SK-N-SH (cell line): ENCODE measurements at regions of chr13 and their contacts with region 1.

Region 1: DNA sequence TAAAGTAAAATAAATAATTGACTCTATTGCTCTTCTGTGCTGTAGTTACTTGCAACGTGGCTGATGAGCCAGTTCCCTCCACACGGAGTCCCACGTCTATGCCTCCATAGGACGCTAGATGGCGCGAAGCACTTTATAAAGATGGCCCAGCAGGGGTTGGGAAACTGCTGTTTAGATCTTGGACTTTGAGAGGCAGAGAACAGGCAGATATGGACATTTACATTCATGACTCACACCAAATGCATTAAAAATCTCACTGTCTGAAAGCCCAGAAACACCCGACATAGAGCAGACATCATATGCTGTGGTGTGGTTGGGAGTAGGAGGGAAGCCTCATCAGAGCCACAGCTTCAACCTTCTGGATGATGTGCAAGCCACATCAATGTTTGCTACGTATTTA is 643.1 kb upstream of the ARGLU1 start:
- DNase-seq: peak; percentile 70
- H3K4me3 ChIP-seq: peak overlapping the region in 1 of 2 experiments; percentile 11; a peak in 1 of 4 replicates
- H3K27ac ChIP-seq: no peak overlapping the region; a peak in 1 of 4 replicates
- H3K4me1 ChIP-seq: peaks cover 11 to 17% of the 10 kb centered on the region in 2 experiments; a peak in 3 of 4 replicates
- H3K27me3 ChIP-seq: no peaks in the 10 kb centered on the region
- CTCF ChIP-seq: peak; percentile 96
- EP300 ChIP-seq: 0 out of 4 replicates have a peak, but pooled peaks of 1 of the 2 experiments have one; percentile 21
- RAD21 ChIP-seq: peak; percentile 98

Region 2: DNA sequence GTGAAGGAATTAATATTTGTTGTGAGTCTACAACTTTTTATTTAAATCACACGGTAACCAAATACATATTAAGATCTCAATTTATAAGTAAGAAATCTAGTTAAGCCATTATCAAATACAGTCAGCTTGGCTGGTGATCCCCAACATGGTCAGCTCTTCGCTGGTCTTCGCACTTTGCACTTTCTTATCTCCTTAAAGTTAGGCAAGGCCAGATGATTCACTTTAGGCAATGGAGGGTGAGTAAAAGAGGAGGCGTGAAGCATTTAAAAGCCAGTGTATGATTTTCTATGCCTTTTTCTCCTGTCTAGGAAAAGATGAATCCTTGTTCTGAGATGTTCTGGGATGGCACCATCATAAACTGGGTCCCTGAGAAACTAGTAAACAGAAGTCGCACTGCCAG is 150.6 kb after region 1 on chr13:
- CTCF ChIA-PET with region 1: no interaction called
- POLR2A ChIA-PET with region 1: no interaction called
- DNase-seq: no peak
- H3K4me3 ChIP-seq: no peak overlapping the region
- H3K27ac ChIP-seq: no peak overlapping the region
- H3K4me1 ChIP-seq: peaks cover 3 to 17% of the 10 kb centered on the region in 2 experiments; a peak in 2 of 4 replicates
- H3K27me3 ChIP-seq: no peaks in the 10 kb centered on the region
- CTCF ChIP-seq: no peak
- EP300 ChIP-seq: no peak
- RAD21 ChIP-seq: no peak

Region 3: GRCh38 chr13:107867701-107868661 is 656.9 kb after region 1 on chr13:
- CTCF ChIA-PET with region 1: interaction called, 11 read pairs
- POLR2A ChIA-PET with region 1: no interaction called
- DNase-seq: peak; percentile 87
- H3K4me3 ChIP-seq: peak overlapping the region; percentile 59 to 96
- H3K27ac ChIP-seq: peak overlapping the region; percentile 72 to 90
- H3K4me1 ChIP-seq: peaks cover 0 to 5% of the 10 kb centered on the region in 2 experiments; a peak in 3 of 4 replicates
- H3K27me3 ChIP-seq: no peaks in the 10 kb centered on the region
- CTCF ChIP-seq: peak; percentile 83
- EP300 ChIP-seq: no peak
- RAD21 ChIP-seq: peak; percentile 92